ENCODE measurements at regions of chr7 and their contacts with region 1.

Region 1: DNA sequence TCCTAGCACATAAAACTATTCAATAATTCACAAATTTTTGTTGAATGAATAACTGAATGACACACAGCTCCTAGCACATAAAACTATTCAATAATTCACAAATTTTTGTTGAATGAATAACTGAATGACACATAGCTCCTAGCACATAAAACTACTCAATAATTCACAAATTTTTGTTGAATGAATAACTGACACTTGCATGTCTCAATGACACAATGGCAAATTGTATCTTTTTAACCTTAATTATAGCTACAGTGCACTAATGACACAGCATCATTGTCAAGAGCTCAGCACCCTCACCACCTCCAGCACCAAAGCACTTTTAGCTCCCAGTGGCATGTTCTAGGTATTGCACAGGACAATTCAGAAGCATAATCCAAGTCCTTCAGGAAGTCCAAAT is 131.6 kb downstream of the PDE1C start:
- DNase-seq: peak; percentile 6
- H3K4me3 ChIP-seq: no peak overlapping the region
- H3K27ac ChIP-seq: no peak overlapping the region
- H3K4me1 ChIP-seq: peaks cover 10% of the 10 kb centered on the region
- H3K27me3 ChIP-seq: no peaks in the 10 kb centered on the region
- CTCF ChIP-seq: no peak
- POLR2A ChIP-seq: no peak

Region 2: GRCh38 chr7:31953432-31953831 is 14.8 kb after region 1 on chr7:
- CTCF ChIA-PET with region 1: interaction called, 11 read pairs
- POLR2A ChIA-PET with region 1: no interaction called
- dilution Hi-C with region 1: no loop called
- intact Hi-C with region 1: no loop called
- DNase-seq: no peak
- H3K4me3 ChIP-seq: no peak overlapping the region
- H3K27ac ChIP-seq: no peak overlapping the region
- H3K4me1 ChIP-seq: peaks cover 8% of the 10 kb centered on the region
- H3K27me3 ChIP-seq: no peaks in the 10 kb centered on the region
- CTCF ChIP-seq: no peak
- POLR2A ChIP-seq: no peak

Region 3: DNA sequence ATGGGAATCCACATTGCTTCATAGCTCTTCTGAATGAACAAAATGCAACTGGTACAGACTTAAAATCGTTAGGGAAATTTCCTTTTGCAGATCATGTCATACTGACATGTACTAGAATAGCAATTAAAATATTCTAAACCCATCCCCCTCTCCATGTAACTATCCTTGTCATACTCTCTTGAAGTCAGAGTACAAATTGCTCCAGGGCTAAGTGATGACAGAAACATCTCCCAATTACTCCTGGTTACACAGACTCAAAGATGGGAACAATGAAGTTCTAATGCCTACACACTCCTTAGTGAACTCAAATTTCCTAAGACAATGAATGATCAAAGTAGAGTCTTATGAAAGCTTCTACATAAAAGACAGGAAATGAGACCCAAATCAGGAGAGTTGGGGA is 44.3 kb after region 1 on chr7:
- CTCF ChIA-PET with region 1: no interaction called
- POLR2A ChIA-PET with region 1: no interaction called
- dilution Hi-C with region 1: no loop called
- intact Hi-C with region 1: no loop called
- DNase-seq: no peak
- H3K4me3 ChIP-seq: no peak overlapping the region
- H3K27ac ChIP-seq: no peak overlapping the region
- H3K4me1 ChIP-seq: peaks cover 19% of the 10 kb centered on the region
- H3K27me3 ChIP-seq: no peaks in the 10 kb centered on the region
- CTCF ChIP-seq: no peak
- POLR2A ChIP-seq: no peak

Measured in endothelial cell of umbilical vein (primary cell).